Naive thymus-derived CD4-positive, alpha-beta T cell (primary cell): ENCODE measurements at regions of chr6 and their contacts with region 1.

Region 1: DNA sequence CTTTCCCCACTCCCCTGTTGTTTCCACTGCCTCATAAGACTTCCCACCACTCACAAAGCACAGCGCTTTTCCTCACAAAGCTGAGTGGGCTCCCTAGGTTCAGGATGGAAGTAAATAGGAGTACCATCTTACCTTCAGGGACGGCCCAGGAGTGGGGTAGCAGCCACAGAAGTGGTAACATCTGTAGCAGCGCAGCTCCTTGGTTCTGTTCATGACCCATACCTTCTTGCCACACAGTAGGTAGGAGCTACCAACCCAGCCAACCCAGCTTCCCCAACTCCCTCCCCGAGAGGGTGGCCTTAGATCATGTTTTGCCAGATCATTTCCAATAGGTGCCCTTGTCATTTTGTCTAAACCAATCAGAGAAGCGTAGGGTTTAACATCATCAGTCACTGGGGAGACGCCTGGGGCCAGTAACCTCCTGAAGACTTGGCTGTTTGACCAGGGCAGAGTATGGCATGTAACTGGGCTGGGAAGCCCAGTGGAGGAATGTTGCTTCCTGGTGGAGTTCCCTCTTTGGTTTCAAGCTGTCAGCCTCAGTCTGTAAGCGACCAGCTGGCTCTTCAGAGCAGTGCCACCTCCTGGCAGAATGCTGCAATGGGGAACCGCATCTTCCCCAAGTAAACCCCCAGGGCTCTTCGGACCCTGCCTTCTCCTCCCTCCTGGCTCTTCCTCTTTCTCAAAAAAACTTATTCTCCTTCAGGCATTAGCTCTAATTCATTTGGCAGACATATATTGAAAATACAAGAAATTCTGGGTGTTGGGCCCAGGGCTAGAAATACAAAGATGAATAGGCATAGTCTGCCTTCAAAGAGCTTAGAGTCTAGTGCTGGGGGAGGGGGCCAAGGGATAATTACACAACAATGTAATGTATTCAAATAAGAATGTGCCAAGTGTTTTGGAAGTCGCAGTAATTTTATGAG is at the start of gene HLA-DMA:
- DNase-seq: peak; percentile 52 to 89 (median 83)
- ATAC-seq: peak; percentile 96
- H3K4me3 ChIP-seq: peak within 1 kb of the TSS; percentile 64
- H3K4me3 Mint-ChIP-seq: peak within 1 kb of the TSS; percentile 75 to 86 (median 82)
- H3K27ac ChIP-seq: peak within 1 kb of the TSS; percentile 63
- H3K27ac Mint-ChIP-seq: peak within 1 kb of the TSS; percentile 61 to 94 (median 88)
- H3K4me1 ChIP-seq: peaks cover 21 to 23% of the 10 kb centered on the region in 2 donors
- H3K4me1 Mint-ChIP-seq: peaks cover 44 to 57% (median 48%) of the 10 kb centered on the region in 7 donors
- H3K27me3 ChIP-seq: no peaks in the 10 kb centered on the region
- H3K27me3 Mint-ChIP-seq: no peaks in the 10 kb centered on the region
- total RNA-seq, gene HLA-DMA: 12.5 to 120 (median 29.6) TPM

Region 2: DNA sequence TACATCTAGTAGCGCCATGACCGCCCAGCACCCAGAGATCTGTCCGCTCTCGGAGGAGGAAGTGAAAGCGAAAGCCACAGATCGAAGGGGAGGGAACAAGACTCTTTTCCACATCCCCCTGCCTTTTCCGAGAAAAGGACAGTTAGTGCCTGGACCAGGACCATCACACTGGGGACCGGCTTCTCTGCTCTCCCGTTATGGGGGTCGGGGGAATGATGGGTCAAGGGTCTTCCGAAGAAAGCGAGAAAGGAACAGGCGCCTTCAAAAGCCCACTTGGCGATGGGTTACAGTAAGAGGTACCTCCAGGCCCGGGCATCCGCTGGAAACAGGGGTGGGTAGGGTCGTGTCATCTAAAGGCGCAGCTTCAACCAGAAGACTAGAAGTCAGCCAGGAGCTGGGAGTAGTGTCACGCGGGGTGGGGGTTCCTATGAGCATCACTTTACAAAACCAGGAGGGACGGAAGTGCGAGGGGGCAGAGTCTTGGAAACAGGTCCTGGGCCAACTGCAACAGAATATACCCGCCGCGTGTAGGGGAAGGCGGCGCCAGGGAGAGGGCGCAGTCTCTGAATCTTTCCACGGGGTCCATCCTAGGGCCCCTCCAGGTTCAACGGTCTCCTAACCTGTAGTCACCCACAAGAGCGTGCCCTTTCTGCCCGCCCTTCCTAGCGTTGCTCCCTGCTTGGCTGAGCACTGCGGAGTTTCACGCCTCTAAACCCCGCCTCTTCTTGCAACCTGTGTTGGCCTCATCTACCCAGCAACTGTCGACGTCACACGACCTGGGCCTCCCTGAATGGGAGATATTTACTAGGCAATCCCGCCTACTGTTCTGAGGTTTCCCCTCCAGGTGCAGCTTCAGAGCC is 108.9 kb before region 1 on chr6 and contains the start of gene PSMB8:
- CTCF ChIA-PET with region 1: interaction called, 12 read pairs
- POLR2A ChIA-PET with region 1: interaction called, 19 read pairs
- intact Hi-C with region 1: no loop called
- DNase-seq: peak; percentile 92 to 99 (median 97)
- ATAC-seq: peak; percentile 90
- H3K4me3 ChIP-seq: peak within 1 kb of the TSS; percentile 97
- H3K4me3 Mint-ChIP-seq: peak within 1 kb of the TSS; percentile 92 to 99 (median 98)
- H3K27ac ChIP-seq: peak within 1 kb of the TSS; percentile 97
- H3K27ac Mint-ChIP-seq: peak within 1 kb of the TSS; percentile 99 to 100 (median 100)
- H3K4me1 ChIP-seq: peaks cover 71 to 72% of the 10 kb centered on the region in 2 donors
- H3K4me1 Mint-ChIP-seq: peaks cover 66 to 83% (median 79%) of the 10 kb centered on the region in 7 donors
- H3K27me3 ChIP-seq: no peaks in the 10 kb centered on the region
- H3K27me3 Mint-ChIP-seq: no peaks in the 10 kb centered on the region
- total RNA-seq, gene PSMB8: 111 to 419 (median 115) TPM

Region 3: GRCh38 chr6:32885698-32886286 is 67.3 kb before region 1 on chr6:
- CTCF ChIA-PET with region 1: interaction called, 18 read pairs
- POLR2A ChIA-PET with region 1: interaction called, 4 read pairs
- intact Hi-C with region 1: loop called (anchors 1 kb)
- DNase-seq: peak in 7 of 9 donors; percentile 48 to 78 (median 68)
- ATAC-seq: peak; percentile 69
- H3K4me3 ChIP-seq: no peak overlapping the region
- H3K4me3 Mint-ChIP-seq: no peak overlapping the region
- H3K27ac ChIP-seq: no peak overlapping the region
- H3K27ac Mint-ChIP-seq: no peak overlapping the region
- H3K4me1 ChIP-seq: no peaks in the 10 kb centered on the region
- H3K4me1 Mint-ChIP-seq: peaks cover 0 to 4% (median 0%) of the 10 kb centered on the region in 7 donors
- H3K27me3 ChIP-seq: no peaks in the 10 kb centered on the region
- H3K27me3 Mint-ChIP-seq: peaks cover 0 to 10% (median 0%) of the 10 kb centered on the region in 5 donors

Region 4: GRCh38 chr6:32933636-32934085 is 19.4 kb before region 1 on chr6:
- CTCF ChIA-PET with region 1: interaction called, 411 read pairs
- POLR2A ChIA-PET with region 1: interaction called, 30 read pairs
- intact Hi-C with region 1: loop called (anchors 1 kb)
- DNase-seq: peak; percentile 47 to 77 (median 67)
- ATAC-seq: peak; percentile 79
- H3K4me3 ChIP-seq: no peak overlapping the region
- H3K4me3 Mint-ChIP-seq: no peak overlapping the region
- H3K27ac ChIP-seq: no peak overlapping the region
- H3K27ac Mint-ChIP-seq: peak overlapping the region in 2 of 9 donors; percentile 32 to 45
- H3K4me1 ChIP-seq: no peaks in the 10 kb centered on the region
- H3K4me1 Mint-ChIP-seq: peaks cover 0 to 24% (median 6%) of the 10 kb centered on the region in 7 donors
- H3K27me3 ChIP-seq: no peaks in the 10 kb centered on the region
- H3K27me3 Mint-ChIP-seq: peaks cover 0 to 35% (median 0%) of the 10 kb centered on the region in 5 donors

Region 5: DNA sequence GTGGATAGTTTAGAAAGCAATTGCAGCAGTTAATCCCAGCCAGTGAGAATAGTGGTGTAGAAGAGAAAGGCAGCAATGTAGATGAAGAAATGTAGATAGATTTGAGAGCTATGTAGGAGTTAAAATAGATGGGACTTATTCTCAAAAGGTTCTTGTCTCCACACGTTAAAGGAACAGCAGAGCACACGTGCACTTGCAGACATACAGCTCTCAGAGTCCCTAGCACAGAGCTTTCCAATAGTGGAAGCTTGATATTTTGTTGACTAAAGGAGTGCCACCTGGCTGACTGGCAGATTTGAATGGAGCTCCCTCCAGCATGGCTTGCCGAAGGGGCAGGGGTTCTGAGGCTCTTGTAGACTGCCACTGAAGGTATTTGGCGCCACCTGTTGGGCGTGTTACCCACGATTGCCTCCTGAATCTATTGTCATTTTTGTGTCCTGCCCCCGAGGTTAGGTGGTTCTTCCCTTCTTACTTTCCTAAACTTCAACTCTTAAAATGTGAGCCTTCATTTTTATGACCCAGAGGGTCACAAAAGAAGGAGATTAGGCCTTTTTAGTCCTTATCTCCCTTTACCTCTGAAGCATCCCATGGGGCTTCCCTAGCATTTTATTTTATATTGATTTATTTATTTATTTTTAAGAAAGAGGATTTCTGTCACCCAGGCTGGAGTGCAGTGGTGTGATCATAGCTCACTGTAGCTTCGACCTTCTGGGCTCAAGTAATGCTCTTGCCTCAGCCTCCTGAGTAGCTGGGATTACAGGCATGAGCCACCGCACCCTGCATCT is 31.7 kb after region 1 on chr6:
- CTCF ChIA-PET with region 1: interaction called, 78 read pairs
- POLR2A ChIA-PET with region 1: interaction called, 638 read pairs
- intact Hi-C with region 1: loop called in 1 of 2 experiments (anchors 1 kb)
- DNase-seq: peak; percentile 69 to 87 (median 84)
- ATAC-seq: peak; percentile 86
- H3K4me3 ChIP-seq: no peak overlapping the region
- H3K4me3 Mint-ChIP-seq: peak overlapping the region in 1 of 10 donors; percentile 4
- H3K27ac ChIP-seq: no peak overlapping the region
- H3K27ac Mint-ChIP-seq: peak overlapping the region in 6 of 9 donors; percentile 34 to 75 (median 46)
- H3K4me1 ChIP-seq: peaks cover 0 to 6% of the 10 kb centered on the region in 2 donors
- H3K4me1 Mint-ChIP-seq: peaks cover 15 to 29% (median 22%) of the 10 kb centered on the region in 7 donors
- H3K27me3 ChIP-seq: no peaks in the 10 kb centered on the region
- H3K27me3 Mint-ChIP-seq: no peaks in the 10 kb centered on the region

Region 6: DNA sequence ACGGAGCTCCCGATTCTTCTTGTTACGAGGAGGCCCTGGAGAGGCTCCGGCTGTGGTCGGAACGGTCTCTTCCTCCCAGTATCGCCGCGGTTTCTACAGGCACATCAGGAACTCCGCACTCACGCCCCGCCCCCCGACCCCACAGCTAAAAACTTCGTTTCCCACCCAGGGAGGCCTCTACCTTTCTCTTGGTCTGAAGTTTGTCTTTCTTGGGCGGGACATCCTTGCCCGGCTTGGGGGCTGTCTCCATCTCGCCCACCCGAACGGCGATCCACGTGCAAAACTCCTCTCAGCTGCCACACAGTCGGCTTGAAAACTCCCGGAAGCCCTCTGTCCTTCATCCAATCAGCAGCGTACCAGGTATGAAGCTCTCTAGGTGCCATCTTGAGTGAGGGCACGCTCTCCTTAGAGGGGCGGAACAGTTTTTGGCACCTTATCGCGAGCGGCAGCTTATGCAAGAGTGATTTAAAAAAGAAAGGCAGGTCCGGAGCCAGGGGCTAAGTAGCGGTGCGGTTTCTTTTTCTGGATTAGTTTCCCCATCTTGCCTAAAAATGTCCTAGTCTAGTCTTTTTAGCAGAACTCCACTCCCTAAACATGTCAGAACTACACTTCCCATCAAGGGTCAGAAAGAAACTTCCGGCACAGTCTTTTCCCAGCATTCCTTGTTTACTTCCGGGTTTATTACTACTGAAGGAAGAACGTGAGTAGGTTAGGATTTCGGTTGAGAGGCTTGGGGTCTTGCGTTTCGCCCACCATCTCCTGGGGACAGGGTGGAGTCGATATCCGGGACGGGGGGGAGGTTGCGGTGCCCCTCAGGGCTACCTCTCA is 336.1 kb after region 1 on chr6 and contains the starts of genes PFDN6 and WDR46:
- CTCF ChIA-PET with region 1: no interaction called
- POLR2A ChIA-PET with region 1: no interaction called
- intact Hi-C with region 1: no loop called
- DNase-seq: peak; percentile 55 to 90 (median 87)
- ATAC-seq: peak; percentile 96
- H3K4me3 ChIP-seq: peak within 1 kb of the TSS; percentile 97
- H3K4me3 Mint-ChIP-seq: peak within 1 kb of the TSS; percentile 89 to 99 (median 98)
- H3K27ac ChIP-seq: peak within 1 kb of the TSS; percentile 80
- H3K27ac Mint-ChIP-seq: peak within 1 kb of the TSS; percentile 89 to 98 (median 92)
- H3K4me1 ChIP-seq: peaks cover 19 to 20% of the 10 kb centered on the region in 2 donors
- H3K4me1 Mint-ChIP-seq: peaks cover 32 to 51% (median 45%) of the 10 kb centered on the region in 7 donors
- H3K27me3 ChIP-seq: no peaks in the 10 kb centered on the region
- H3K27me3 Mint-ChIP-seq: no peaks in the 10 kb centered on the region
- total RNA-seq, gene PFDN6: 14.6 to 73.2 (median 35.5) TPM
- total RNA-seq, gene WDR46: 25.3 to 62.7 (median 52.7) TPM